HepG2 (cell line): ENCODE measurements at regions of chr16 and their contacts with region 1.

Region 1: DNA sequence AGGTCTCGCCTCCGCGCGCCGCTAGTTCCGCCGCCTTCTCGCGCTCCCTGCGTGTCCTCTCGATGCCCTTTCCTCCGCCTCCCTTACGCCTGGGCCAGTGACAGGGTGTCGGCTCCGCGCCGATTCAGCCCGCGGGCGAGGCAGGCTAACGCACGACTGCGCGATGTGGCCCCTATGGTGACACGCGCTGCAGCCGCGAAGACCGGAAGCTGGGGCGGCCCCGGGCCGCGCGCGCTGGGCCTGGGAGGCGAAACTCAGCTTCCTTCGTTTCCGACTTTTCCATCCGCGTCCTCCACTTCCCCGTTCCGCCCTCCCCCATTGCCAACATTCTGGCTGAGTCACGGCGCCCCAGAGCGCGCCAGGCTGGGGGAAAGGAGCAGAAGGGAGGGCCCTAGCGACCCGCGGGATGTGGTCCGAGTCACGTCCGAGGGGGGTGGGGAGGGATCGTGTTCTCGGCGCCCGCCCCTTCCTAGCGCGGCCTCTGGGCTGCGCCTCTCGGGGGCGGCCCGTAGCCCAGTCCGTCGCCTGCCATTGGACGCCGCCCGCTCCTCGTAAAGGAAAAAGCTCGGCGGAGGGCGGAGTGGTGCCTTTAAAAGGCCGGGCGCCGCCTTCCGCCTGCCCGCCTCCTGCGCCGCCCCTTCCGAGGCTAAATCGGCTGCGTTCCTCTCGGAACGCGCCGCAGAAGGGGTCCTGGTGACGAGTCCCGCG is at the start of gene ALDOA:
- DNase-seq: peak; percentile 96
- ATAC-seq: peak; percentile 89
- H3K4me3 ChIP-seq: peak within 1 kb of the TSS; percentile 92 to 100 (median 95)
- H3K27ac ChIP-seq: peak within 1 kb of the TSS; percentile 95
- H3K4me1 ChIP-seq: peaks cover 46% of the 10 kb centered on the region
- H3K27me3 ChIP-seq: peaks cover 0 to 2% of the 10 kb centered on the region in 2 experiments; a peak in 1 of 5 replicates
- CTCF ChIP-seq: peak; percentile 19
- EP300 ChIP-seq: peak; percentile 3 to 87; a peak in 3 of 4 replicates
- POLR2A ChIP-seq: peak in 1 of 2 experiments; percentile 96; a peak in 2 of 4 replicates
- RAD21 ChIP-seq: peak; percentile 62; the same call in 1 of the 2 replicates
- total RNA-seq, gene ALDOA: 925 and 999 TPM in 2 replicates

Region 2: DNA sequence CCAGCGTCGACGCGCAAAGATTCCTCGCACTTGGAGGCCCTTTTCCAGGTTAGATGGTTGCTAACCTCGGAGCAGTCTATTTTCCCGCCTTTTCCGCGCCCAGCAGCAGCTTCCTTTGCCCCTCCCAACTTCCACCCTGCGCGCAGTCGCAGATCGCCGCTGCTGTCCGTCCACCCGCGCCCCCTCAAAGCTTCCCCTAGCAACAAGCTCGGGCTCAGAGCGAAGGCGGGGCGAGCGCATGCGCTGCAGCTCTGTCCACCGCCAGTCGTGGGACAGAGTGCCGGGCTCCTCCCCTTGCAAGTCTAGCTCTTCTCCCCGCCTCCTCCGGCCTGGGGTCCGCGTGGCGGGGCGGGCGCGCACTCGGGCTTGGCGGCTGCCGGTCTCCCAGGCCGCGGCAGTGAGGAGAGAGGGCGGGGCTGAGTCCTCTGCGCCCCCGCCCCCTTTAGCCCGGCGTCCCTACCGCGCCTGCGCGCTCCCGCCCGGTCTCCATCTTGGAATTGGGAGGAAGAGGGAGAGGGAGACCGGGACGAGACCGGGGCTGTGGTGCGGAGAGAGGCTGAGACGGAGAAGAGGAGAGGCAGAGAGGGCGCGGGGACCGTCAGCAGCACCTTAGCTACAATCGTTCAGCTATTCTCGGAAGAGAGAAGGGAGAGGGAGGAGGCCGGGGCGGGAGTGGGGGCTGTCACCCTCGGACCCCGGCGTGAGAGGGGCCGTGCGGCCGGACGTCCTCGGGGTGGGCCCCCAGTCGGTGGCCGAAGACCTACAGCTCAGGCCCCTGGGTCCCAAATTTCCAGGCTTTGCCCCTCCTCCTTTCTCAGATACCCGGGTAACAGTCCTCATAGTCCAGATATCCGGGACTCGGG is 91.7 kb before region 1 on chr16 and contains the start of gene TAOK2:
- CTCF ChIA-PET with region 1: no interaction called
- POLR2A ChIA-PET with region 1: interaction called, 10 read pairs
- in situ Hi-C with region 1: no loop called
- intact Hi-C with region 1: no loop called
- DNase-seq: peak; percentile 98
- ATAC-seq: peak; percentile 95
- H3K4me3 ChIP-seq: peak within 1 kb of the TSS; percentile 86 to 99 (median 91)
- H3K27ac ChIP-seq: peak within 1 kb of the TSS; percentile 72
- H3K4me1 ChIP-seq: peaks cover 30% of the 10 kb centered on the region
- H3K27me3 ChIP-seq: no peaks in the 10 kb centered on the region; a peak in 1 of 5 replicates
- CTCF ChIP-seq: peak; percentile 11; the same call in 1 of the 2 replicates
- EP300 ChIP-seq: peak in 1 of 2 experiments; percentile 65; a peak in 2 of 4 replicates
- POLR2A ChIP-seq: peak; percentile 72 to 89
- RAD21 ChIP-seq: peak; percentile 5
- total RNA-seq, gene TAOK2: 27.6 and 43.2 TPM in 2 replicates

Region 3: DNA sequence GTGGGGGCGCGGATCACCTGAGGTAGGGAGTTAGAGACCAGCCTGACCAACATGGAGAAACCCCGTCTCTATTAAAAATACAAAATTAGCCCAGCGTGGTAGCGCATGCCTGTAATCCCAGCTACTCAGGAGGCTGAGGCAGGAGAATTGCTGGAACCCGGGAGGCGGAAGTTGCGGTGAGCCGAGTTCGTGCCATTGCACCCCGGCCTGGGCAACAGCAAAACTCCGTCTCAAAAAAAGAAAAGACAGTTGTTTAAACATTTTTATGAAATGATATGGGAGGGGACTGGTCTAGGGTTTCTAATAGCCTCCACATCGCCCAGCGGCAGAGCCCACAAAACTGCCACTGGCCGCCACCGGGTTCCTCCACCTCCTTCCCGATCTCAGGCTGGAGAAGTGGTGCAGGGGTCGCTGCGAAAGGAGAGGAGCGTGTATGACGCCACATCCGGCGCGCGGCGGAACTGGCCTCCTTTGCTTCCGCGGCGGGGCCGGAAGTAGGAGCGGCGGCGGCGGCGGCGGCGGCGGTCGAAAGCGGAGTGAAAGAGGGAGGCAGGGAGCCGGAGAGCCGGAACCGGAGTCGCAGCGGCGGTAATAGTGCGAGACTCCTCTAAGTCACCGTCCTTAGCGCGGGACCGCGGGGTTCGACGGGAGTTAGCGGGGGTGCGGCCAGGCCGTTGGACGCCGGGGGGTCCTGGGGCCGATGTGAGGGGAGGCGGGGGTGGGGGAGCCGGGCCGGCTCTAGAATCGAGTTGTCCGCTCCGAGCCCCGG is 10.4 kb after region 1 on chr16 and contains the start of gene PPP4C:
- CTCF ChIA-PET with region 1: no interaction called
- POLR2A ChIA-PET with region 1: interaction called, 100 read pairs
- in situ Hi-C with region 1: no loop called
- intact Hi-C with region 1: no loop called
- DNase-seq: peak; percentile 88
- ATAC-seq: peak; percentile 90
- H3K4me3 ChIP-seq: peak within 1 kb of the TSS; percentile 81 to 98 (median 90)
- H3K27ac ChIP-seq: peak within 1 kb of the TSS; percentile 82
- H3K4me1 ChIP-seq: peaks cover 66% of the 10 kb centered on the region
- H3K27me3 ChIP-seq: no peaks in the 10 kb centered on the region; a peak in 1 of 5 replicates
- CTCF ChIP-seq: peak; percentile 51
- EP300 ChIP-seq: peak in 1 of 2 experiments; percentile 9; a peak in 1 of 4 replicates
- POLR2A ChIP-seq: peak; percentile 94 to 97
- RAD21 ChIP-seq: 0 out of 2 replicates have a peak, but pooled peaks have one; percentile 28
- total RNA-seq, gene PPP4C: 176 and 177 TPM in 2 replicates

Region 4: GRCh38 chr16:30091474-30092372 is 26.4 kb after region 1 on chr16 and contains the start of gene TBX6:
- CTCF ChIA-PET with region 1: interaction called, 9 read pairs
- POLR2A ChIA-PET with region 1: interaction called, 120 read pairs
- in situ Hi-C with region 1: no loop called
- intact Hi-C with region 1: loop called (anchors 1 kb)
- DNase-seq: peak; percentile 88
- ATAC-seq: peak; percentile 81
- H3K4me3 ChIP-seq: peak within 1 kb of the TSS; percentile 58 to 78 (median 67)
- H3K27ac ChIP-seq: peak within 1 kb of the TSS; percentile 72
- H3K4me1 ChIP-seq: peaks cover 74% of the 10 kb centered on the region
- H3K27me3 ChIP-seq: no peaks in the 10 kb centered on the region; a peak in 1 of 5 replicates
- CTCF ChIP-seq: peak; percentile 95
- EP300 ChIP-seq: no peak
- POLR2A ChIP-seq: peak; percentile 69 to 76
- RAD21 ChIP-seq: peak; percentile 95
- total RNA-seq, gene TBX6: 0.24 TPM in 1 of 2 replicates, not detected in the other

Region 5: DNA sequence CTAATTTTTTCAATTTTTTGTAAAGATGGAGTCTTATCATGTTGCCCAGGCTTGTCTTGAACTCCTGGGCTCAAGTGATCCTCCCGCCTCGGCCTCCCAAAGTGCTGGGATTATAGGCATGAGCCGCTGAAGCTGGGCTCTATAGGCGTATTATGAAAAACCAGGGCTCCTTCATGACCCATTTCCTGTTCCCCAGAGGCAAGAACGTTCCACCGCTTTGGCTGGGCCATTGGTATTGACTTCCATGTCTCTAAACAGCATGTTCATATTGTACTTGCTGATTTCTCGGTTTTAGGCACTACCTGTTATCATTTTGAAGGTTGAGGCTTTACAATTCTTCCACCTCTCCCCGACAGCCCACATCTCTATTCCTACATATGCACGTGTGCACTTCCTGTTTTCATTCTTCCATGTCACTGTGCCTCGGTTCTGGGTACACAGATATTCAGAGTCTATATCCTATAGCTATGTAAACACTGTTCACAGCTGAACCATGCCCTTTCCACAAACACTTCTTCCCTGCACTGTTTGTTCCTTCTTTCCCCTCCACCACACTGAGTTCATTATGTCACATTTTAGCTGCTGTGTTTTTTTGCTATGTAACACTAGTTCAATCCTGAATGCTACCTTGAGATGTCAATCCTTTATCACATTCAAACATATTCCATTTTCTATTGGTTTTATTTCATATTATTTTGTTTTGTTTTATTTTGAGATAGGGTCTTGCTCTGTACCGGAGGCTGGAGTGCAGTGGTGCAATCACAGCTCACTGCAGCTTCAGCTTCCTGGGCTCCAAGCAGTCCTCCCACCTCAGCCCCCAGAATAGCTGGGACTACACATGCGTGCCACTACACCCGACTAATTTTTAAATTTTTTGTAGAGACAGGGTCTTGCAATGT is 74.5 kb after region 1 on chr16:
- CTCF ChIA-PET with region 1: no interaction called
- POLR2A ChIA-PET with region 1: interaction called, 14 read pairs
- in situ Hi-C with region 1: no loop called
- intact Hi-C with region 1: no loop called
- DNase-seq: peak; percentile 98
- ATAC-seq: peak; percentile 96
- H3K4me3 ChIP-seq: peak overlapping the region; percentile 1 to 25 (median 8); a peak in 2 of 6 replicates
- H3K27ac ChIP-seq: peak overlapping the region; percentile 85
- H3K4me1 ChIP-seq: peaks cover 90% of the 10 kb centered on the region
- H3K27me3 ChIP-seq: no peaks in the 10 kb centered on the region
- CTCF ChIP-seq: peak; percentile 33
- EP300 ChIP-seq: peak; percentile 64 to 92; a peak in 3 of 4 replicates
- POLR2A ChIP-seq: peak; percentile 50; a peak in 3 of 4 replicates
- RAD21 ChIP-seq: 0 out of 2 replicates have a peak, but pooled peaks have one; percentile 25

Region 6: DNA sequence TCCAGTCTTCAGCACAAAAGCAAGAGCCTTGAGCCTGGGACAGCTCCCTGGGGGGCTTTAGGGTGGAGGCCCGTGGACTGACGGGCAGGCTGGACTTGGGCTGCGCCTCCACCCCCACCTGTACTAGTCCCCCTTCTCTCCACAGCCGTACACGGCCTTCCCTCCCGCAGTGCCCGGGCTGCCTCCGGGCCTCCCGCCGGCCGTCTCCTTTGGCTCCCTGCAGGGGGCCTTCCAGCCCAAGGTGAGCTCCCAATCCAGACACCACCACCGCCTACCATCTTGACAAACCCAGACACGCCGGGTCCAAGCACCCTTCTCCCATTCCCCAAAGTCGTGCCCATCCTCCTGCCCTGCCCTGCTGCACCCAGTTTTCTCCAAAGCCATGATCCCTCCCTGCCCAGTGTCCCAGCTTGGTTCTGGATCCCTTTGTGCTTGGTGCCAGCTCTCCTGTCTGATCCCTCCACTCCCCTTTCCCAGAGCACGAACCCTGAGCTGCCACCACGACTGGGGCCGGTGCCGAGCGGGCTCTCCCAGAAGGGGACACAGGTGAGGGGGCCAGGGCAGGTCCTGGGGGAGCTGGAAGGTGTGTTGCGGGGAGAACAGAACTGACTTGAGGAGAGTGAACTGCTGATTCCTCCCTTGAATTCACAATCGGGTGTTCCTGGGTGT is 600.0 kb after region 1 on chr16:
- CTCF ChIA-PET with region 1: no interaction called
- POLR2A ChIA-PET with region 1: no interaction called
- in situ Hi-C with region 1: no loop called
- intact Hi-C with region 1: no loop called
- DNase-seq: no peak
- ATAC-seq: peak; percentile 6; the same call in 1 of the 3 replicates
- H3K4me3 ChIP-seq: no peak overlapping the region
- H3K27ac ChIP-seq: no peak overlapping the region
- H3K4me1 ChIP-seq: peaks cover 26% of the 10 kb centered on the region
- H3K27me3 ChIP-seq: no peaks in the 10 kb centered on the region
- CTCF ChIP-seq: peak; percentile 20
- EP300 ChIP-seq: no peak
- POLR2A ChIP-seq: 0 out of 4 replicates have a peak, but pooled peaks of 1 of the 2 experiments have one; percentile 17
- RAD21 ChIP-seq: no peak